ENCODE measurements at regions of chr5 and their contacts with region 1.

Region 1: DNA sequence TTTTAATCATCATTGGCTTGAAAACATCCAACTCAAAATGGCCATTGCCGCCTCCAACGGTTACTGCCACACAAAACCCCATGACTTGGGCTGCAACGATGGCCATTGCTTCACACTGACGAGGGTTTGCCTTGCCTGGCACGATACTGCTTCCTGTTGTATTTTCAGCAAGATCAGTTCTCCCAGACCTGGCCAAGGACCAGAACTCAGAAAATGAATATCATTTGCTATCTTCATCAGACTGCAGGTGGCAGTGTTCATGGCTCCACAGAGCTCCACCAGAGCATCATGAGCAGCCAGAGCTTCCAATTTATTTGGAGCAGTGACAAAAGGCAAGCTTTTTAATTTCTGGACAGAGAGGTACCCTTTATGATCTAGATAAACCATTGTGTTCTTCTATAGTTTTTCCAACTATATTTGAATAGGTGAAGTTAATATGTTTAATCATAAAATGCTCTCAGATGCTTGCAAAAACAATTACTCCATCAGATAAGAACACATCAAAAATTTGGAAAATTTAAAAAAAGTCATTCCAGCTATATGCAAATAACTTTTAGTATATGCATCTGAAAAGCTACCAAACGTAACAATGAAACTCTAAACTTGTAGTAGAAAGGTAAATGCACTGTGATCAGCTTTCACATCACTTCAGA is 10.4 kb downstream of the AMACR start:
- DNase-seq: peak; percentile 39
- ATAC-seq: peak; percentile 65
- H3K4me3 Mint-ChIP-seq: no peak overlapping the region
- H3K27ac Mint-ChIP-seq: no peak overlapping the region
- H3K4me1 Mint-ChIP-seq: peaks cover 3% of the 10 kb centered on the region
- H3K27me3 Mint-ChIP-seq: no peaks in the 10 kb centered on the region
- CTCF ChIP-seq: peak; percentile 47

Region 2: DNA sequence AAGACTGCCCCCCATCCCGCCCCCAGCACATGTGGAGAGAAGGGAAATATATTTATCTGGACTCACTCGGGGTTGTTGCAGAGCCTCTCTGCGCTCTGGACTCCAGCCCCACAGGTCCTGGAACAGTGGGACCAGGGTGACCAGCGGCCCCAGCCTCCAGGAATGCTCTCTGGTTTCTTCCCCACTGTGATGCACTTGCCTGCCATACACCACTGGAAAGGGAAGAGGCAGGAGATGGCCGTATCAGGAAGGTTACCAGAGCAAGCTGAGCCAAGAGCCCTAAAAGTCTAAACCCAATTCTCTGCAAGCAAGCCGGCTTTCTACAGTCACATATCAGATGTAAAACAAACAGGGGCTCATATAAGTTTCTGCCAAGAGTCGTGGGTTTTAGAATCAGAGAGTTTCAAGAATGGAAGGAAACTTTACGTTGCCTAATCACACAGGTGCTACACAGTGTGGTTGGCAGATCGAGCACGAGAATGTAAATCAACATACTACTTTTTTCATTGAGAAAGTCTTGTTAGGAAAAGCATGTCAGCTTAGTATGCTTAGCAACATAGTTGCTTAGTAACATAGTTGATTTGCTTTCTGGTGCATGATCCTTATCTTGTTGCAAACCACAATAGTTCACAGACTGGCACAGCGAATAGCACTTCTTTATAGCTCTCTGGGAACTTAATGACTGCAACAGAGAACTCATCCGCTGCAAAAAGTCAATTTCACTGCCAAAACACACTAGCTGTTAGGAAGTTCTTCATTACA is 355.5 kb before region 1 on chr5:
- CTCF ChIA-PET with region 1: no interaction called
- POLR2A ChIA-PET with region 1: no interaction called
- intact Hi-C with region 1: no loop called
- DNase-seq: no peak
- ATAC-seq: no peak
- H3K4me3 Mint-ChIP-seq: no peak overlapping the region
- H3K27ac Mint-ChIP-seq: no peak overlapping the region
- H3K4me1 Mint-ChIP-seq: peaks cover 7% of the 10 kb centered on the region
- H3K27me3 Mint-ChIP-seq: no peaks in the 10 kb centered on the region
- CTCF ChIP-seq: no peak

Region 3: DNA sequence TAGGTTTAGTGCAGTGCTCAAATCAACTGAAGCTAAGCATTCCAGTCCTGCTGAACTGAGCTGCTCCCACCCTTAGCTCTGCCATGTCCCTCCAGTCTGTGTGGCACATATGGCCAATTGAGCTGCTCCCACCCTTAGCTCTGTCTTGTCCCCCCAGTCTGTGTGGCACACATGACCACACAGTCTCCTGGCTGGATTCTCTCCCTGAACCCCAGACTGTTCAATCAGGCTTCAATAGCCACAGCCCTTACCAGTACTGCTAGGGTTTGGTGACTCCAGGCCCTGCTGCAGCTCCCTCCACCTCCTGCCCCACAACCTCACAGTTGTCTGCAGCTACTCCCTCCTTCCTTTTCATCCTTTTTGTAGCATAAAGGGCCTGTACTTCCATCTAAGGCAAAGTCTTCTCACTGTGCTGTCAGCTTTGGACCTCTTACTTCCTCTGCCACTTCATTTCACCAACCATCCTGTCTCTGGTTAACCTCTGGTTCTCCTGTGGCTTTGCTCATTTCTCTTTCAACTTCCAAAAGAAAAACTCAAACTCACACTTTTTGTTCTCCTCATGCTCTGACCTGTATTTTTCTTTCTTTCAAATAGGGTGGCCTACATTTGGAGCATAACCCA is 156.4 kb before region 1 on chr5:
- CTCF ChIA-PET with region 1: no interaction called
- POLR2A ChIA-PET with region 1: no interaction called
- intact Hi-C with region 1: no loop called
- DNase-seq: peak; percentile 14
- ATAC-seq: peak; percentile 68
- H3K4me3 Mint-ChIP-seq: no peak overlapping the region
- H3K27ac Mint-ChIP-seq: no peak overlapping the region
- H3K4me1 Mint-ChIP-seq: peaks cover 12% of the 10 kb centered on the region
- H3K27me3 Mint-ChIP-seq: no peaks in the 10 kb centered on the region
- CTCF ChIP-seq: no peak

Region 4: GRCh38 chr5:33877449-33877848 is 120.0 kb before region 1 on chr5:
- CTCF ChIA-PET with region 1: no interaction called
- POLR2A ChIA-PET with region 1: no interaction called
- intact Hi-C with region 1: no loop called
- DNase-seq: no peak
- ATAC-seq: no peak
- H3K4me3 Mint-ChIP-seq: no peak overlapping the region
- H3K27ac Mint-ChIP-seq: no peak overlapping the region
- H3K4me1 Mint-ChIP-seq: no peaks in the 10 kb centered on the region
- H3K27me3 Mint-ChIP-seq: no peaks in the 10 kb centered on the region
- CTCF ChIP-seq: no peak

Region 5: GRCh38 chr5:33978307-33978706 is 19.1 kb before region 1 on chr5:
- CTCF ChIA-PET with region 1: interaction called, 11 read pairs
- POLR2A ChIA-PET with region 1: no interaction called
- intact Hi-C with region 1: no loop called
- DNase-seq: no peak
- ATAC-seq: no peak
- H3K4me3 Mint-ChIP-seq: no peak overlapping the region
- H3K27ac Mint-ChIP-seq: no peak overlapping the region
- H3K4me1 Mint-ChIP-seq: peaks cover 3% of the 10 kb centered on the region
- H3K27me3 Mint-ChIP-seq: peaks cover 1% of the 10 kb centered on the region
- CTCF ChIP-seq: no peak

Region 6: DNA sequence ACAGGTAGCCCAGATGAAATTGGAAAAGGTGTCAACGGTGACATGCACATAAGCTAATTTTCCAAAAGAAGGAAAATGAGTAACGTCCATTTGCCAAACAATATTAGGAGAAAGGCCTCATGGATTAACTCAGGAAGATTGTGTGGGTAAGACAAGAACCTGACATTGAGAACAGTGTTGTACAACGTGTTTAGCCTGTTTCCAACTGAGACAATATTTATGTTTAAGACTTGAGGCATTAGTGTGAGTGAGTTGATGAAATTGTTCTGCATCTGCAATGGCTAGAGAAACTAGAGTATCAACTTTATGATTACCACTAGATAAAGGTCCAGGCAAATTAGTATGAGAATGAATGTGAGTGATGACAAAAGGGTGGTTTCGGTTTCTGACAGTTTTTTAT is 467.4 kb after region 1 on chr5:
- CTCF ChIA-PET with region 1: interaction called, 3 read pairs
- POLR2A ChIA-PET with region 1: no interaction called
- intact Hi-C with region 1: loop called (anchors 5 kb)
- DNase-seq: no peak
- ATAC-seq: no peak
- H3K4me3 Mint-ChIP-seq: no peak overlapping the region
- H3K27ac Mint-ChIP-seq: no peak overlapping the region
- H3K4me1 Mint-ChIP-seq: peaks cover 2% of the 10 kb centered on the region
- H3K27me3 Mint-ChIP-seq: peaks cover 5% of the 10 kb centered on the region
- CTCF ChIP-seq: no peak

Measured in activated CD8-positive, alpha-beta T cell treated with anti-CD3 and anti-CD28 coated beads for 36 hours (primary cell).